ENCODE measurements at regions of chr12 and their contacts with region 1.

Region 1: DNA sequence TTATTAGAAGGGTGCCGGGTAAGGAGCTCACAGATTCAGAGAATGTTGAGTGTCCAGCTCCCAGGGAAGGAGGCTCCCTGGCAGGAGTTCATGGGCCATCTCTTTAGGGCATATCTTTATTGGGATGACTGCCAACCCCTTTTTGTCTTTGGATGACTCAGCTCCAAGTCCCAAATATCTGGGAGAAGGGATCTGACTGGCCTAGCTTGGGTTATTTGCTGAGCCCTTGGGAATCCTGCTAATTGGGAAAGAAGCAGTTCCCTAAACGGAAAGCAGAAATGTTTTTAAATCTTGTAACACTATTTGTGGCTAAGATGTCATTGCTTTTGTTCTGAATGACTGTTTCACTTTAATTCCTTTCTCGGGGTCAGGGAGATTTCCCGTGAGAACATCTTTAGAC is 12.6 kb downstream of the DDX55 start:
- DNase-seq: peak; percentile 94
- H3K4me3 Mint-ChIP-seq: peak overlapping the region; percentile 14
- H3K27ac Mint-ChIP-seq: peak overlapping the region; percentile 67
- H3K4me1 Mint-ChIP-seq: peaks cover 17% of the 10 kb centered on the region
- H3K27me3 Mint-ChIP-seq: no peaks in the 10 kb centered on the region
- CTCF ChIP-seq: no peak

Region 2: GRCh38 chr12:123271001-123271729 is 343.4 kb before region 1 on chr12:
- CTCF ChIA-PET with region 1: no interaction called
- POLR2A ChIA-PET with region 1: no interaction called
- intact Hi-C with region 1: loop called (anchors 2 kb)
- DNase-seq: peak; percentile 64
- H3K4me3 Mint-ChIP-seq: peak overlapping the region; percentile 80
- H3K27ac Mint-ChIP-seq: no peak overlapping the region
- H3K4me1 Mint-ChIP-seq: peaks cover 11% of the 10 kb centered on the region
- H3K27me3 Mint-ChIP-seq: no peaks in the 10 kb centered on the region
- CTCF ChIP-seq: peak; percentile 64

Region 3: GRCh38 chr12:123601602-123602489 is 12.7 kb before region 1 on chr12 and contains the start of gene DDX55:
- CTCF ChIA-PET with region 1: no interaction called
- POLR2A ChIA-PET with region 1: interaction called, 33 read pairs
- intact Hi-C with region 1: no loop called
- DNase-seq: peak; percentile 82
- H3K4me3 Mint-ChIP-seq: peak within 1 kb of the TSS; percentile 98
- H3K27ac Mint-ChIP-seq: peak within 1 kb of the TSS; percentile 92
- H3K4me1 Mint-ChIP-seq: peaks cover 23% of the 10 kb centered on the region
- H3K27me3 Mint-ChIP-seq: no peaks in the 10 kb centered on the region
- CTCF ChIP-seq: peak; percentile 42
- total RNA-seq, gene DDX55: 28.4 and 30.5 TPM in 2 replicates

Region 4: GRCh38 chr12:123761841-123762714 is 147.5 kb after region 1 on chr12 and contains the start of gene DNAH10:
- CTCF ChIA-PET with region 1: no interaction called
- POLR2A ChIA-PET with region 1: no interaction called
- intact Hi-C with region 1: no loop called
- DNase-seq: no peak
- H3K4me3 Mint-ChIP-seq: no peak within 1 kb of the TSS
- H3K27ac Mint-ChIP-seq: no peak within 1 kb of the TSS
- H3K4me1 Mint-ChIP-seq: peaks cover 11% of the 10 kb centered on the region
- H3K27me3 Mint-ChIP-seq: no peaks in the 10 kb centered on the region
- CTCF ChIP-seq: no peak
- total RNA-seq, gene DNAH10: 0.21 and 0.22 TPM in 2 replicates

Region 5: GRCh38 chr12:123931686-123932321 is 317.3 kb after region 1 on chr12:
- CTCF ChIA-PET with region 1: no interaction called
- POLR2A ChIA-PET with region 1: no interaction called
- intact Hi-C with region 1: no loop called
- DNase-seq: no peak
- H3K4me3 Mint-ChIP-seq: no peak overlapping the region
- H3K27ac Mint-ChIP-seq: no peak overlapping the region
- H3K4me1 Mint-ChIP-seq: no peaks in the 10 kb centered on the region
- H3K27me3 Mint-ChIP-seq: no peaks in the 10 kb centered on the region
- CTCF ChIP-seq: no peak

Region 6: DNA sequence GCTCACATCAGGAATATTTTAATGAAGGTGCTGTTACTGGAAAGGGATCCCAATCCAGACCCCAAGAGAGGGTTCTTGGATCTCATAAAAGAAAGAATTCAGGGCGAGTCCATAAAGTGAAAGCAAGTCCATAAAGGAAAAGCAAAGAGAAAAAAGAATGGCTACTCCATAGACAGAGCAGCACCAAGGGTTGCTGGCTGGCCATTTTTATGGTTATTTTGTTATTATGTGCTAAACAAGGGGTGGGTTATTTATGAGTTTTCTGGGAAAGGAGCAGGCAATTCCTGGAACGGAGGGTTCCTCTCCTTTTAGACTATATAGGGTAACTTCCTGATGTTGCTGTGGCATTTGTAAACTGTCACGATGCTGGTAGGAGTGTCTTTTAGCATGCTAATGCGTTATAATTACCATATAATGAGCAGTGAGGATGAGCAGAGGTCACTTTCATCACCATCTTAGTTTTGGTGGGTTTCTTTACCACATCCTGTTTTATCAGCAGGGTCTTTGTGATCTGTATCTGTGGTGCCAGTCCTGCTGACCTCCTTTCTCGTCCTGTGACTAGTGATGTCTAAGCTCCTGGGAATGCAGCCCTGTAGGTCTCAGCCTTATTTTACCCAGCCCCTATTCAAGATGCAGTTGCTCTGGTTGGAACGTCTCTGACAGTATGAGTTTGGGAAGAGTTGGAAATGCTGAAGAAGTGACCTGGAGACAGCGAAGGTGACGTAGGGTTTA is 458.9 kb after region 1 on chr12:
- CTCF ChIA-PET with region 1: no interaction called
- POLR2A ChIA-PET with region 1: no interaction called
- intact Hi-C with region 1: no loop called
- DNase-seq: no peak
- H3K4me3 Mint-ChIP-seq: no peak overlapping the region
- H3K27ac Mint-ChIP-seq: no peak overlapping the region
- H3K4me1 Mint-ChIP-seq: peaks cover 6% of the 10 kb centered on the region
- H3K27me3 Mint-ChIP-seq: no peaks in the 10 kb centered on the region
- CTCF ChIP-seq: no peak